PC-9 (cell line): ENCODE measurements at regions of chr3 and their contacts with region 1.

Region 1: GRCh38 chr3:184261270-184261853 is at the start of gene CAMK2N2:
- DNase-seq: peak; percentile 78 to 82
- H3K4me3 ChIP-seq: peak within 1 kb of the TSS; percentile 93
- H3K27ac ChIP-seq: no peak within 1 kb of the TSS
- H3K4me1 ChIP-seq: peaks cover 15% of the 10 kb centered on the region; the same call in 1 of the 2 replicates
- H3K27me3 ChIP-seq: no peaks in the 10 kb centered on the region
- CTCF ChIP-seq: no peak
- total RNA-seq, gene CAMK2N2: 2.2 and 2.6 TPM in 2 replicates

Region 2: DNA sequence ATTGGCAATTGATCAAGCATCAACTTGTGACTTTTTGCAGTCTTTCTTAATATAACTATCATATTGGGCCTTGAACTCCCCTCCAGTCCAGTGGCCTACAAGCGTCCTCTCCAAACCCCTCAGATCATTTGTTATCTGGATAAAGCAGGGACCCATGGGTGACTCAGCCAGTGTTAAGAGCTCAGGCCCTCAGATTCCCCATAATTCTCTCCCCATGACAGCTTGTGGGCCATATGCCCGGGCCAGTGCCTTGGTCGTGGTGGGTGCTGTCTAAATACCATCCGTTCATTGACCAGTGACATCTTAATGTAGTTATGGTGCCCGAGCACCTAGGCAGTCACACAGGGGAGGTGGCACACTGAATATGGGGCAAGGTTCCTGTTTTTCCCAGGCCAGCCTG is 851.1 kb before region 1 on chr3:
- CTCF ChIA-PET with region 1: no interaction called
- POLR2A ChIA-PET with region 1: no interaction called
- intact Hi-C with region 1: no loop called
- DNase-seq: no peak
- H3K4me3 ChIP-seq: no peak overlapping the region
- H3K27ac ChIP-seq: no peak overlapping the region
- H3K4me1 ChIP-seq: no peaks in the 10 kb centered on the region
- H3K27me3 ChIP-seq: no peaks in the 10 kb centered on the region
- CTCF ChIP-seq: no peak

Region 3: DNA sequence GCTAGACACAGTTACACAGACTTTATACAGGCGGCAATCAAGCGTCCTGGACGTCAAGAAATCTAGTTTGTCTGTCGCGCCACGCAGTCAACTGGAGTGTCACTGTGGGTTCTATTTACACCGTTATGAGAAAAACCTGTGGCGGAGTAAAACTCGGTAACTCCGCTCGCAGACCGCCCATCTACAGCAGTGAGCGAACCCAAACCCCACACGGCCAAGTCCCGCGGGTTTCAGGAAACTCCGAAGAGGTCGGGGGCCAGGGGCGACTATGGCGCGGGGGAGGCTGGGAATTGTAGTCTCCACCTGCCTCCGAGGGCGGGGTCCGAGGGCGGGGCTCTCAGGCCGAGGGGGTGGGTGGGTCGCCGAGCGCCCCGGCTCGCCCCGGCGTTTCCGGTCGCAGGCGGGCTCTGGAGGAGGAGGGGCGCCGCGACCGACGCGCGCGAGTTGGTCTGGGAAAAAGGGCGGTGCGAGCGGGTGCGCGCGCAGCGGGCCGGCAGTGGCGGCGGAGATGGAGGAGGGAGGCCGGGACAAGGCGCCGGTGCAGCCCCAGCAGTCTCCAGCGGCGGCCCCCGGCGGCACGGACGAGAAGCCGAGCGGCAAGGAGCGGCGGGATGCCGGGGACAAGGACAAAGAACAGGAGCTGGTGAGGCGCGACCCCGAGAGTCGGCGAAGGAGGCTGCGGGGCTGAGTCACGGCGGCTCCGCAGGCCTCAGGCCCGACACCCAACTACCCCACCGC is 37.6 kb after region 1 on chr3 and contains the start of gene PSMD2:
- CTCF ChIA-PET with region 1: no interaction called
- POLR2A ChIA-PET with region 1: interaction called, 3 read pairs
- intact Hi-C with region 1: loop called (anchors 2 kb)
- DNase-seq: peak; percentile 92 to 99
- H3K4me3 ChIP-seq: peak within 1 kb of the TSS; percentile 100
- H3K27ac ChIP-seq: peak within 1 kb of the TSS; percentile 57
- H3K4me1 ChIP-seq: peaks cover 15% of the 10 kb centered on the region
- H3K27me3 ChIP-seq: no peaks in the 10 kb centered on the region
- CTCF ChIP-seq: no peak
- total RNA-seq, gene PSMD2: 521 and 788 TPM in 2 replicates

Region 4: GRCh38 chr3:184380191-184380626 is 118.8 kb after region 1 on chr3:
- CTCF ChIA-PET with region 1: no interaction called
- POLR2A ChIA-PET with region 1: interaction called, 23 read pairs
- intact Hi-C with region 1: no loop called
- DNase-seq: peak in 1 of 2 experiments; percentile 46
- H3K4me3 ChIP-seq: no peak overlapping the region
- H3K27ac ChIP-seq: no peak overlapping the region
- H3K4me1 ChIP-seq: no peaks in the 10 kb centered on the region
- H3K27me3 ChIP-seq: peaks cover 77% of the 10 kb centered on the region
- CTCF ChIP-seq: no peak

Region 5: DNA sequence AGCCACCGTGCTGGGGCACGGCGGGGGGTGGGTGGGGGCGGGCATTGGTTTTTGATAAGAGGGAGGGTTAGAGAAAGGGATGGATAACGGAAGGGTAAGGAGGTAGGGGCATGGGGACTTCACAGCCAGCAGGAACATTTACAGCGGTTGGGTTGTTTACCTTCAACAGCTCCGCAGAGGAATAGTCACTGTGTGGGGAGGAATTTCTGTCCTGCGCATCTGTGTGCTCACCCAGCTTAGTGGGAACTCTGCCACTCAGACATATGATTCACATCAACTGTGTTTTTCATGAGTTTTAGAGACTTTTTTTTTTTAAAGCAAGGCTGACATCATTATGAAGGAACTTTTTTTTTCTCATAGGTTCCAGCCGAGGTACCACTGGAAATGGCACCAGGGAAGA is 138.0 kb after region 1 on chr3:
- CTCF ChIA-PET with region 1: interaction called, 17 read pairs
- POLR2A ChIA-PET with region 1: no interaction called
- intact Hi-C with region 1: no loop called
- DNase-seq: no peak
- H3K4me3 ChIP-seq: no peak overlapping the region
- H3K27ac ChIP-seq: no peak overlapping the region
- H3K4me1 ChIP-seq: no peaks in the 10 kb centered on the region
- H3K27me3 ChIP-seq: peaks cover 91% of the 10 kb centered on the region
- CTCF ChIP-seq: no peak